ENCODE measurements at regions of chr9 and their contacts with region 1.

Region 1: GRCh38 chr9:31243386-31243785 is 1141.1 kb upstream of the ACO1 start:
- DNase-seq: no peak
- ATAC-seq: no peak
- H3K4me3 ChIP-seq: no peak overlapping the region
- H3K27ac ChIP-seq: no peak overlapping the region
- H3K4me1 ChIP-seq: no peaks in the 10 kb centered on the region
- H3K27me3 ChIP-seq: no peaks in the 10 kb centered on the region
- CTCF ChIP-seq: no peak
- POLR2A ChIP-seq: no peak

Region 2: GRCh38 chr9:31272456-31273295 is 29.3 kb after region 1 on chr9:
- intact Hi-C with region 1: loop called in 1 of 10 experiments (anchors 2 kb)
- DNase-seq: no peak
- ATAC-seq: no peak
- H3K4me3 ChIP-seq: no peak overlapping the region
- H3K27ac ChIP-seq: no peak overlapping the region
- H3K4me1 ChIP-seq: no peaks in the 10 kb centered on the region
- H3K27me3 ChIP-seq: no peaks in the 10 kb centered on the region
- CTCF ChIP-seq: no peak
- POLR2A ChIP-seq: no peak

Region 3: GRCh38 chr9:31304576-31304975 is 61.2 kb after region 1 on chr9:
- intact Hi-C with region 1: loop called in 1 of 10 experiments (anchors 10 kb)
- DNase-seq: no peak
- ATAC-seq: no peak
- H3K4me3 ChIP-seq: no peak overlapping the region
- H3K27ac ChIP-seq: no peak overlapping the region
- H3K4me1 ChIP-seq: no peaks in the 10 kb centered on the region
- H3K27me3 ChIP-seq: no peaks in the 10 kb centered on the region
- CTCF ChIP-seq: no peak
- POLR2A ChIP-seq: no peak